ENCODE measurements at regions of chr9 and their contacts with region 1.

Region 1: GRCh38 chr9:88593537-88594185 is 58.7 kb downstream of the NXNL2 start:
- DNase-seq: peak in 8 of 9 donors; percentile 32 to 69 (median 64)
- ATAC-seq: peak; percentile 72
- H3K4me3 ChIP-seq: no peak overlapping the region
- H3K4me3 Mint-ChIP-seq: no peak overlapping the region
- H3K27ac ChIP-seq: no peak overlapping the region
- H3K27ac Mint-ChIP-seq: no peak overlapping the region
- H3K4me1 ChIP-seq: no peaks in the 10 kb centered on the region
- H3K4me1 Mint-ChIP-seq: peaks cover 0 to 9% (median 0%) of the 10 kb centered on the region in 7 donors
- H3K27me3 ChIP-seq: no peaks in the 10 kb centered on the region
- H3K27me3 Mint-ChIP-seq: peaks cover 8 to 29% (median 16%) of the 10 kb centered on the region in 5 donors

Region 2: GRCh38 chr9:88494983-88495721 is 98.5 kb before region 1 on chr9:
- CTCF ChIA-PET with region 1: no interaction called
- POLR2A ChIA-PET with region 1: no interaction called
- intact Hi-C with region 1: no loop called
- DNase-seq: no peak
- ATAC-seq: no peak
- H3K4me3 ChIP-seq: no peak overlapping the region
- H3K4me3 Mint-ChIP-seq: no peak overlapping the region
- H3K27ac ChIP-seq: no peak overlapping the region
- H3K27ac Mint-ChIP-seq: no peak overlapping the region
- H3K4me1 ChIP-seq: no peaks in the 10 kb centered on the region
- H3K4me1 Mint-ChIP-seq: no peaks in the 10 kb centered on the region
- H3K27me3 ChIP-seq: no peaks in the 10 kb centered on the region
- H3K27me3 Mint-ChIP-seq: peaks cover 0 to 3% (median 0%) of the 10 kb centered on the region in 5 donors

Region 3: DNA sequence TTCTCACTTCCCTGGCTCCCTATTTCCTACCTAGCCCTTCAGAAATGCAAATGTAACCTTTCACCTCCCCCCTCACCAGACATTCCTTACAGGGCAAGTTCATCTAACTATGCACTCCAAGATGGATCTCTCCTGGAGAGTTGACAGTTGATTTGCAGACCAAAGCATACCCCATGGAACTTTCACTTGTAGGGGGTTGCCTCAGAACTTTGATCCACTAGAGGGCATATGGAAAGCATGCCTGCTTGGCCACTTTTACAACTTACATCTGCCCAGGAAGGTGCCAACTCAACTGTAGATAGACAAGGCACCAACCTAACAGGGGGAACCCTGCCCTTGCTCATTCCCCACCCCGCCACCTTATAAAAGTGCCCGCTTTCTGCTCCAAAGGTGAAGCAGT is 129.1 kb after region 1 on chr9:
- CTCF ChIA-PET with region 1: no interaction called
- POLR2A ChIA-PET with region 1: no interaction called
- intact Hi-C with region 1: loop called in 1 of 2 experiments (anchors 1 kb)
- DNase-seq: peak in 3 of 9 donors; percentile 3 to 13 (median 8)
- ATAC-seq: no peak
- H3K4me3 ChIP-seq: no peak overlapping the region
- H3K4me3 Mint-ChIP-seq: no peak overlapping the region
- H3K27ac ChIP-seq: no peak overlapping the region
- H3K27ac Mint-ChIP-seq: no peak overlapping the region
- H3K4me1 ChIP-seq: no peaks in the 10 kb centered on the region
- H3K4me1 Mint-ChIP-seq: no peaks in the 10 kb centered on the region
- H3K27me3 ChIP-seq: no peaks in the 10 kb centered on the region
- H3K27me3 Mint-ChIP-seq: peaks cover 13 to 48% (median 27%) of the 10 kb centered on the region in 5 donors

Region 4: GRCh38 chr9:88741335-88741734 is 147.7 kb after region 1 on chr9:
- CTCF ChIA-PET with region 1: no interaction called
- POLR2A ChIA-PET with region 1: no interaction called
- intact Hi-C with region 1: loop called in 1 of 2 experiments (anchors 2 kb)
- DNase-seq: no peak
- ATAC-seq: no peak
- H3K4me3 ChIP-seq: no peak overlapping the region
- H3K4me3 Mint-ChIP-seq: no peak overlapping the region
- H3K27ac ChIP-seq: no peak overlapping the region
- H3K27ac Mint-ChIP-seq: no peak overlapping the region
- H3K4me1 ChIP-seq: no peaks in the 10 kb centered on the region
- H3K4me1 Mint-ChIP-seq: no peaks in the 10 kb centered on the region
- H3K27me3 ChIP-seq: no peaks in the 10 kb centered on the region
- H3K27me3 Mint-ChIP-seq: peaks cover 10 to 27% (median 22%) of the 10 kb centered on the region in 5 donors

Region 5: GRCh38 chr9:88835038-88835466 is 241.4 kb after region 1 on chr9:
- CTCF ChIA-PET with region 1: no interaction called
- POLR2A ChIA-PET with region 1: no interaction called
- intact Hi-C with region 1: loop called in 1 of 2 experiments (anchors 10 kb)
- DNase-seq: peak in 7 of 9 donors; percentile 45 to 81 (median 79)
- ATAC-seq: peak; percentile 95
- H3K4me3 ChIP-seq: no peak overlapping the region
- H3K4me3 Mint-ChIP-seq: peak overlapping the region in 9 of 10 donors; percentile 2 to 82 (median 64)
- H3K27ac ChIP-seq: no peak overlapping the region
- H3K27ac Mint-ChIP-seq: peak overlapping the region in 6 of 9 donors; percentile 22 to 90 (median 69)
- H3K4me1 ChIP-seq: peaks cover 16 to 25% of the 10 kb centered on the region in 2 donors
- H3K4me1 Mint-ChIP-seq: peaks cover 9 to 35% (median 27%) of the 10 kb centered on the region in 7 donors
- H3K27me3 ChIP-seq: peaks cover 0 to 19% of the 10 kb centered on the region in 2 donors
- H3K27me3 Mint-ChIP-seq: peaks cover 55 to 82% (median 72%) of the 10 kb centered on the region in 5 donors

Measured in naive thymus-derived CD4-positive, alpha-beta T cell (primary cell).